WTC11 (cell line): ENCODE measurements at regions of chrX and their contacts with region 1.

Region 1: DNA sequence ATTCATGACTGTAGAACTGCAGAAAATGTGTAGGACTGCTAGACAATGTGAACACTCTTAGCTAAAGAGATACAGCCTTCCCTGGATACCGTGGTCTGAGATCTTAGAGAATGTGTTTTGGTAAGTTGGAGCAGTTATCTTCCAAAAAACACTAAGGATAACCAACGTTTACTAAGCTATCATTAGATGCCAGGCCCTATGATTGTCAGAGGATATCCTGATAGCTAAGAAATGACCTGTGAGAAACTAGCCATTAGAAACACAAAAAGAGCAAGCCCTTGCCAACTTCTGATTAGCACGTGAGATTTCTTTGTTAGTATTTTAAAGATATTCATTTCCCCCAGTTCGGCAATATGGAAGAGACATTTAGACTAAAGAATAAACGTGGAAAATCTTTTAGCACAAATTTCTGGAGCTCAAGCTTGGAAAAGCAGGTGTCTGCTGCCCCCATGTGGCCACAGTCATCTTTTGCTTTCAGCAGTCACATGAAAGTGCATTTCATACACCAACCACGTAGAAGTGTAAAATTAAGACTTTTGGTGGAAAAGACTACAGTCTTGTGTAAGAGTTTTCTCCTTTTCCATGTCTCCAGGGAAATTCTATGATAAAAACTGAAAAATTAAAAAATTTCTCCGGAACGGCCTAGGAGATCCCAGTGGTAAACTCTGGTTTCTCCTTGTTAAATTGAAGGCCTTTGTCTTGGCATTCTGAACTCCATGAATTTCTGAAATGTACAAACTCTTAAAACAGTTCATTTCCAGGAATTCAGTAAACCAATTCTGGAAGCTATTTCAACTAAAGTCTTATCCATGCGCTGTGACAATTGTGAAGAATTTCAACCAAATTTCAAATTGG is 136.4 kb downstream of the ZNF674 start:
- DNase-seq: peak; percentile 67
- ATAC-seq: no peak
- H3K4me3 Mint-ChIP-seq: no peak overlapping the region
- H3K27ac Mint-ChIP-seq: no peak overlapping the region
- H3K4me1 Mint-ChIP-seq: no peaks in the 10 kb centered on the region
- H3K27me3 Mint-ChIP-seq: no peaks in the 10 kb centered on the region
- CTCF ChIP-seq: peak; percentile 63

Region 2: DNA sequence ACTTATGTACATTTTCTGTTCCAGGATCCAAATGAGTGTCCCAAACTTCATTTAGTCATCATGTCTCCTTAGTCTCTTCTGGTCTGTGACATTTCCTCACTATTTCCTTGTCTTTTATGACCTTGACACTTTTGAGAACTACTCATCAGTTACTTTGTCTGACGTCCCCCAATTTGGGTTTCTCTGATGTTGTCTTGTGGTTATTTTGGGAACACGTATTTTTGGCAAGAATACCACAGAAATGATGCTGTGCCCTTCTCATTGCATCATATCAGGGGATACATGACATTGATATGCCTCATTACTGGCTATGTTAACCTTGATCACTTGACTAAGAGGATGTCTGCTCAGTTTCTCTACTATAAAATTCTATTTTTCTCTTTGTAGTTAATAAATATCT is 172.4 kb before region 1 on chrX:
- CTCF ChIA-PET with region 1: no interaction called
- POLR2A ChIA-PET with region 1: no interaction called
- DNase-seq: no peak
- ATAC-seq: no peak
- H3K4me3 Mint-ChIP-seq: no peak overlapping the region
- H3K27ac Mint-ChIP-seq: no peak overlapping the region
- H3K4me1 Mint-ChIP-seq: no peaks in the 10 kb centered on the region
- H3K27me3 Mint-ChIP-seq: no peaks in the 10 kb centered on the region
- CTCF ChIP-seq: no peak

Region 3: DNA sequence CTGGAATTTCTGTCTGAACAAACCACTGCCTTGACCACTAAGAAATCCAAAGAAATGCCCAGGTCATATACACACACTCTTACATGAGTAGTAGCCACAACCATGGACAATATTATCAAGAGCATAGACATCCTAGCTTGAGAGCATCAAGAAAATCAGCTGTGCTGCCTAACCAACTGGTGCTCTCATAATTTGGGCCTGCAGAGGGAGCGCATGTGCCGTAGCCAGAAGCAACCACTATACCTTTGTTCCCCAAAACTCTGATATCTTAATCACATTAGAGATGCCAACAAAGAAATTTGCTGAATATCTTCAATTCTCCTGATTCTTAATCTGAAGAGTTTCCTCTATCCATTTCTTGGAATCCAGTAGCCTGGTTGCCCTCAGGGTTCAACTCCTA is 27.1 kb before region 1 on chrX:
- CTCF ChIA-PET with region 1: interaction called, 15 read pairs
- POLR2A ChIA-PET with region 1: no interaction called
- DNase-seq: peak; percentile 30
- ATAC-seq: peak; percentile 64; the same call in 1 of the 2 replicates
- H3K4me3 Mint-ChIP-seq: no peak overlapping the region
- H3K27ac Mint-ChIP-seq: no peak overlapping the region
- H3K4me1 Mint-ChIP-seq: no peaks in the 10 kb centered on the region
- H3K27me3 Mint-ChIP-seq: no peaks in the 10 kb centered on the region
- CTCF ChIP-seq: 0 out of 2 replicates have a peak, but pooled peaks have one; percentile 26